Dorsolateral prefrontal cortex (tissue), 120 donors: ENCODE measurements at regions of chr3 and their contacts with region 1.

Region 1: DNA sequence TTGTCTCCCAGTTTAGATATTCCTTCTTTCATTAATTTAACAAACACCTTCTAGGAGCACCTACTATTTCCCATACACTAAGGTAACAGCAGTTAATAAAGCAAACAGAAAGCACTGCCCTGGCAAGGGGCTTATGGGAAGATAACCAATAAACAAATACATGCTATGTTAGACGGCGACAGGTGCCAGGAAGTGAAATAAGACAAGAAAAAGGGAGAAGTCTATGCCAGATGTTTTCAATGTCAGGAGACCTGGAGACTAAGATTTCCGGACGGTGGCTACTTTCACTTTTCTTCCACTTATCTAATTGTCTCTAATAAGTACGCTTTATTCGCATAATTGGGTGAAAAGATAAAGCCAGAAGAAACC is 32.5 kb upstream of the ZNF445 start:
- DNase-seq: no peak
- H3K4me3 ChIP-seq: peak overlapping the region; percentile 52 to 99 (median 88)
- H3K27ac ChIP-seq: peak overlapping the region in 57 of 59 donors; percentile 6 to 95 (median 87)
- H3K27me3 ChIP-seq: no peaks in the 10 kb centered on the region
- CTCF ChIP-seq: no peak

Region 2: GRCh38 chr3:44477312-44478030 is 32.5 kb before region 1 on chr3 and contains the start of gene ZNF445:
- intact Hi-C with region 1: loop called (anchors 1 to 2 kb)
- DNase-seq: peak; percentile 58 to 92 (median 77)
- H3K4me3 ChIP-seq: peak within 1 kb of the TSS; percentile 39 to 94 (median 80)
- H3K27ac ChIP-seq: peak within 1 kb of the TSS in 54 of 59 donors; percentile 20 to 91 (median 75)
- H3K27me3 ChIP-seq: no peaks in the 10 kb centered on the region
- CTCF ChIP-seq: peak in 9 of 56 donors; percentile 13 to 57 (median 21)
- total RNA-seq, gene ZNF445: 30.2 to 47.3 (median 38.2) TPM

Region 3: GRCh38 chr3:44535364-44535763 is 25.4 kb after region 1 on chr3:
- intact Hi-C with region 1: no loop called
- DNase-seq: no peak
- H3K4me3 ChIP-seq: no peak overlapping the region
- H3K27ac ChIP-seq: no peak overlapping the region
- H3K27me3 ChIP-seq: peaks cover 0 to 53% (median 13%) of the 10 kb centered on the region in 45 donors
- CTCF ChIP-seq: no peak

Region 4: GRCh38 chr3:44624749-44625480 is 114.9 kb after region 1 on chr3 and contains the start of gene ZNF197:
- intact Hi-C with region 1: loop called (anchors 2 to 10 kb)
- DNase-seq: peak; percentile 81 to 93 (median 90)
- H3K4me3 ChIP-seq: peak within 1 kb of the TSS; percentile 48 to 98 (median 93)
- H3K27ac ChIP-seq: peak within 1 kb of the TSS in 57 of 59 donors; percentile 14 to 94 (median 86)
- H3K27me3 ChIP-seq: no peaks in the 10 kb centered on the region
- CTCF ChIP-seq: peak in 52 of 56 donors; percentile 16 to 70 (median 49)
- total RNA-seq, gene ZNF197: 18.3 to 34.0 (median 24.6) TPM

Region 5: DNA sequence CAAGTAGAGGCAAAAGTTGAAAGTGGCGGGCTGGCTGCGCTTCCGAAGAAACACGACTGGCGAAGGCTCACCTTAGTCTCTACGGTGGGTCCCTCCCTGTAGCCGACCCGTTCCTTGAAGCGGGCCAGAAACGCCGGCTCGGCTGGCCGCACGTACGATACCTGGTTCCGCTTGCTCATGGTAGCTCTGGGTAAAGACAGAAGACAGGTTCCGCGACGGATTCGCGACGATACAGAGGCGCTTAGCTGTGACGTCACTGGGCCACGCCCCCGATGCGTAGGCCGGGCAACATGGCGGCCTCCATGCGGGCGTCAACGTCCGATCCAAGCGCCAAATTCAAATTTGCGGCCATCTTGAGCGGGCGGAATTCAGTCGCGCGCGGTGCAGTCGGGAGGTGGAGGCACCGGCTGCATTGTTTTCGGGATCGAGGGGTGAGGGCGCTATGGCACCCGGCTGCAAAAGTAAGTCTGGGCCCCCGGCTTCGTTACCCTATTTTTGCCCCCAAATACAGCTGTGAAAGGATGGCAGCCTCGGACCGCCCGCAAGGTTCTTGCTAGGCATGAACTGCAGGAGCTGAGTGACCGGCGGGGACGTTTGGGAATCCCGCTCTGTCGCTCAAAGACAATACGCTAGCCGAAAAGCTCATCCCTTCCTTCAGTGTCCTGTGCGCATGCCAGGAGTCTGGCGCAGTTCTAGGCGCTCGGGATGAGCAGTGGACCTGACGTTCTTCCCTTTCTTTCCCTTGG is 251.6 kb after region 1 on chr3 and contains the starts of genes KIAA1143 and KIF15:
- intact Hi-C with region 1: loop called in 1 of 2 experiments (anchors 10 kb)
- DNase-seq: peak; percentile 94 to 96 (median 96)
- H3K4me3 ChIP-seq: peak within 1 kb of the TSS; percentile 63 to 98 (median 84)
- H3K27ac ChIP-seq: peak within 1 kb of the TSS in 39 of 59 donors; percentile 15 to 86 (median 66)
- H3K27me3 ChIP-seq: no peaks in the 10 kb centered on the region
- CTCF ChIP-seq: peak in 37 of 56 donors; percentile 6 to 51 (median 29)
- total RNA-seq, gene KIAA1143: 14.8 to 43.5 (median 27.6) TPM
- total RNA-seq, gene KIF15: 0.31 to 3.4 (median 1.5) TPM

Region 6: DNA sequence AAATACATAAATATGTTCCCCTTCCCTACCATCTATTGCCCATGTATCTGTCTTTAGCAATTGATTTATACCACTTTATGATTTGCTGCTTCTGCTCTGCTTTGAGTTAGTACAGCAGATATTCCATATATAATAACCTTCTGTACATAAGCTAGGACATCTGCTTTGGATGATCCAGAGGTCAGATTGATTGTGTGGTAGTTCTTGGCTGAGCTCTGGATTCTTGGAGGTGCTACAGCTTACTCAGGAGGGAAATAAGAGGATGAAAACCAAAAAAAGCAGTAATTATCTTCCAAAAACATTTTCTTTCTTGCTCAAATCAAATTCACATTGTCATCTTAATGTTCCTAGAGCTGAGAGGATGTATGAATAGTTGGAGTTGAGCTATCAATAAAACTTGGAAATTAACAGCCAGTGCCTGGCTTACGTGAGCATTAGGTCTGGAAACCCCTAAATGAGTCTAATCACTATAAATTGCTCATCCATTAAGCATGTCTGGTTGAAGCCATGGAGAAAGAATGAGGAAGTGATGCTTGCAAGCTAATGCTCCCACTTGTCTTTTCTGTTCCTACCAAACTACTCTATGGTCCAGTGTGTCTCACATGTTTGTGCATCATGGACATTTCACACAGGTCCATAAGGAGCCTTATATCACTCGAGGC is 315.4 kb after region 1 on chr3:
- intact Hi-C with region 1: no loop called
- DNase-seq: no peak
- H3K4me3 ChIP-seq: no peak overlapping the region
- H3K27ac ChIP-seq: no peak overlapping the region
- H3K27me3 ChIP-seq: no peaks in the 10 kb centered on the region
- CTCF ChIP-seq: no peak

Region 7: GRCh38 chr3:44976002-44976815 is 466.2 kb after region 1 on chr3 and contains the starts of genes EXOSC7 and ZDHHC3:
- intact Hi-C with region 1: loop called in 1 of 2 experiments (anchors 5 kb)
- DNase-seq: peak; percentile 78 to 90 (median 86)
- H3K4me3 ChIP-seq: peak within 1 kb of the TSS; percentile 65 to 100 (median 94)
- H3K27ac ChIP-seq: peak within 1 kb of the TSS in 50 of 59 donors; percentile 37 to 92 (median 72)
- H3K27me3 ChIP-seq: no peaks in the 10 kb centered on the region
- CTCF ChIP-seq: peak in 33 of 56 donors; percentile 7 to 60 (median 26)
- total RNA-seq, gene EXOSC7: 25.6 to 46.6 (median 33.5) TPM
- total RNA-seq, gene ZDHHC3: 41.3 to 77.7 (median 54.1) TPM